ENCODE measurements at regions of chr10 and their contacts with region 1.

Region 1: DNA sequence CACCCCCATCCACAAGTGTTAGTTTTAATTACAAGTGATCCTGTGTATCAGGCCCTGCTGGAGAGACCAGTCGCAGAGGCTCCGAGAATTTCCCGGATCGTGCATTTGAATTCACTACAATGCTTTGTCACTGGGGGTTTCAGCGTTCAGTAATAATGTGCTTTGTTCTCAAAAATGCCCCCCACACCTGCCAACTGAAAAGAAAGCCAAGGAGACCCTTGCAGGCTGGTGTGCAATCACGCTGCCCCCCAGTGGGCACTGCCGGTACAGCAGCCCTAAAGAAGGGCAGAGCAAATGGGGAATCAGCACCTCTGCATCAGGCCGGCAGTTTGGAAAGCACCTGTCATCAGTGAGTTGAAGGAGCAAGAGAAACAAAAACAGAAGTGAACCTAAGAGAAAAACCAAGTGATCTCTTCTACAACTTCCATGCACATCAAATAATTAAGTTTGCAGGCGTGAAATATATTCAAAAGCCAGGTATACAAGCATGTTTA is 177.6 kb downstream of the PARD3 start:
- DNase-seq: peak; percentile 40
- ATAC-seq: peak; percentile 89
- H3K4me3 ChIP-seq: peak overlapping the region; percentile 7; the same call in 1 of the 2 replicates
- H3K27ac ChIP-seq: no peak overlapping the region
- H3K4me1 ChIP-seq: 0 out of 2 replicates have a peak, but pooled peaks cover 5% of the 10 kb centered on the region
- H3K27me3 ChIP-seq: no peaks in the 10 kb centered on the region
- CTCF ChIP-seq: peak; percentile 91 to 98 (median 97)
- EP300 ChIP-seq: peak in 1 of 2 experiments; percentile 42; a peak in 2 of 4 replicates
- POLR2A ChIP-seq: no peak
- RAD21 ChIP-seq: peak; percentile 75

Region 2: DNA sequence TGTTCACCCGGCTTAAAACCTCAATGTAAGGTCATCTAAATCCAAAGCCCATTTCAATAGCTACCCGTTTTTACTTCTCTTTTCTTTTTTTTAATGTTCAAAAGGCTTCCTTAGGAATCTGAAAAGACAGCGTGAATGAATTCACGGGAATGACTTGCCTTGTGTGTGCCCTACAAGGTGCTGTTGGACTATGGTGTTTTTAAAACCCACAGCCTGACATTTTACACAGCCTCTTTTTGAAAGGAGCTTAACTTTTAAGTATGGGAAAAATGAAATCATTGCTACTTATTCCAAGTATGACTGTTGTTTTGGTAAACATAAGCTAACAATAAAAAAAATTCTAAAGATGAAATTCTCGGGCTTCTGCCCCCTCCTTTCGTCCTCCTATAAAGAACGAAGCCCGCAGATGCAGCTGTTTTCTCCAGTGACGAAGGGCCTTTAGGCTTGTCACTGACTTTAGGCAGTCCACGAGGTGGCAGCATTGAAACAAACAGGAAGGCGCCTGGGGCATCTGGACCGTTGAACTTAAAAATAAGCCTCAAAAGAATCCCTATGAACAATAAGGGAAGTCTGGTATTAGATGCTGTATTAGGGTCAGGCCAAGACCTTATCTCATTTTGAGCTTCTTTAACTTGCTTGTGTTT is 1444.3 kb before region 1 on chr10:
- CTCF ChIA-PET with region 1: interaction called, 45 read pairs
- POLR2A ChIA-PET with region 1: no interaction called
- RAD21 ChIA-PET with region 1: interaction called, 27 read pairs
- SMC1A ChIA-PET with region 1: interaction called, 18 read pairs
- in situ Hi-C with region 1: loop called (anchors 25 kb)
- intact Hi-C with region 1: loop called (anchors 2 kb)
- DNase-seq: no peak
- ATAC-seq: peak; percentile 98
- H3K4me3 ChIP-seq: no peak overlapping the region
- H3K27ac ChIP-seq: no peak overlapping the region
- H3K4me1 ChIP-seq: no peaks in the 10 kb centered on the region
- H3K27me3 ChIP-seq: no peaks in the 10 kb centered on the region; a peak in 1 of 4 replicates
- CTCF ChIP-seq: peak; percentile 59 to 69 (median 66)
- EP300 ChIP-seq: no peak
- POLR2A ChIP-seq: no peak
- RAD21 ChIP-seq: peak; percentile 60

Region 3: DNA sequence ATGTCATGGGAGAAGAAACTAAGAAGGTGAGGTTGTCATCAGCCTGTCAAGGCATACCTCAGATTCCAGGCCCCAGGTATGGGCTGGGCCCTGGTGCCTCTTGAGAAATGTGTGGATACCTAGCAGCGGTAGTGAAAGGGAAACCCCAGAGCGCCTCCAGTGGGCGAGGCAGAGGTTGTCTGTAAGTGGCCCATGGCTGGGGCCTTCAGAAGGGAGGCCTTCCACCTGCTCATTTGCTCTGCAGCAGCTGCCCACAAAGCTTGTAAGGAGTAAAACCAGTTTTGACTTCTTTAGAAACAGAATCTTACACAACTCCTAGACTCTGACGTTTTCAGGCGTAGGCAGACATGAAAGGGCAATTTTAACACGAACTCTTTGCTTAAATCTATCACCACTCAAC is 332.3 kb before region 1 on chr10:
- CTCF ChIA-PET with region 1: interaction called, 5 read pairs
- POLR2A ChIA-PET with region 1: no interaction called
- RAD21 ChIA-PET with region 1: no interaction called
- SMC1A ChIA-PET with region 1: interaction called, 4 read pairs
- in situ Hi-C with region 1: no loop called
- intact Hi-C with region 1: loop called (anchors 10 kb)
- DNase-seq: no peak
- ATAC-seq: peak; percentile 95
- H3K4me3 ChIP-seq: no peak overlapping the region
- H3K27ac ChIP-seq: no peak overlapping the region
- H3K4me1 ChIP-seq: no peaks in the 10 kb centered on the region
- H3K27me3 ChIP-seq: no peaks in the 10 kb centered on the region
- CTCF ChIP-seq: peak; percentile 12 to 47 (median 32); a peak in 3 of 6 replicates
- EP300 ChIP-seq: no peak
- POLR2A ChIP-seq: no peak
- RAD21 ChIP-seq: peak; percentile 20; the same call in 1 of the 2 replicates

Region 4: GRCh38 chr10:34434119-34434594 is 203.3 kb before region 1 on chr10:
- CTCF ChIA-PET with region 1: no interaction called
- POLR2A ChIA-PET with region 1: no interaction called
- RAD21 ChIA-PET with region 1: no interaction called
- SMC1A ChIA-PET with region 1: no interaction called
- in situ Hi-C with region 1: no loop called
- intact Hi-C with region 1: no loop called
- DNase-seq: no peak
- ATAC-seq: peak; percentile 35
- H3K4me3 ChIP-seq: no peak overlapping the region
- H3K27ac ChIP-seq: no peak overlapping the region
- H3K4me1 ChIP-seq: no peaks in the 10 kb centered on the region
- H3K27me3 ChIP-seq: no peaks in the 10 kb centered on the region
- CTCF ChIP-seq: no peak
- EP300 ChIP-seq: no peak
- POLR2A ChIP-seq: no peak
- RAD21 ChIP-seq: no peak

Region 5: GRCh38 chr10:34522546-34522945 is 114.9 kb before region 1 on chr10:
- CTCF ChIA-PET with region 1: interaction called, 210 read pairs
- POLR2A ChIA-PET with region 1: interaction called, 3 read pairs
- RAD21 ChIA-PET with region 1: interaction called, 97 read pairs
- SMC1A ChIA-PET with region 1: interaction called, 127 read pairs
- in situ Hi-C with region 1: loop called (anchors 5 kb)
- intact Hi-C with region 1: loop called (anchors 1 kb)
- DNase-seq: no peak
- ATAC-seq: peak; percentile 63
- H3K4me3 ChIP-seq: no peak overlapping the region
- H3K27ac ChIP-seq: no peak overlapping the region
- H3K4me1 ChIP-seq: peaks cover 7% of the 10 kb centered on the region; the same call in 1 of the 2 replicates
- H3K27me3 ChIP-seq: no peaks in the 10 kb centered on the region
- CTCF ChIP-seq: peak; percentile 62 to 63 (median 63)
- EP300 ChIP-seq: no peak
- POLR2A ChIP-seq: no peak
- RAD21 ChIP-seq: peak; percentile 84

Region 6: GRCh38 chr10:34538281-34538829 is 99.1 kb before region 1 on chr10:
- CTCF ChIA-PET with region 1: interaction called, 32 read pairs
- POLR2A ChIA-PET with region 1: no interaction called
- RAD21 ChIA-PET with region 1: interaction called, 5 read pairs
- SMC1A ChIA-PET with region 1: interaction called, 6 read pairs
- in situ Hi-C with region 1: no loop called
- intact Hi-C with region 1: no loop called
- DNase-seq: peak; percentile 57
- ATAC-seq: peak; percentile 77
- H3K4me3 ChIP-seq: peak overlapping the region; percentile 31; the same call in 1 of the 2 replicates
- H3K27ac ChIP-seq: peak overlapping the region; percentile 39
- H3K4me1 ChIP-seq: peaks cover 18% of the 10 kb centered on the region
- H3K27me3 ChIP-seq: no peaks in the 10 kb centered on the region
- CTCF ChIP-seq: no peak
- EP300 ChIP-seq: no peak
- POLR2A ChIP-seq: no peak
- RAD21 ChIP-seq: no peak

Region 7: GRCh38 chr10:34615770-34616169 is 21.7 kb before region 1 on chr10:
- CTCF ChIA-PET with region 1: interaction called, 32 read pairs
- POLR2A ChIA-PET with region 1: no interaction called
- RAD21 ChIA-PET with region 1: interaction called, 4 read pairs
- SMC1A ChIA-PET with region 1: interaction called, 10 read pairs
- in situ Hi-C with region 1: no loop called
- intact Hi-C with region 1: no loop called
- DNase-seq: no peak
- ATAC-seq: peak; percentile 84
- H3K4me3 ChIP-seq: no peak overlapping the region
- H3K27ac ChIP-seq: no peak overlapping the region
- H3K4me1 ChIP-seq: no peaks in the 10 kb centered on the region
- H3K27me3 ChIP-seq: no peaks in the 10 kb centered on the region
- CTCF ChIP-seq: no peak
- EP300 ChIP-seq: 0 out of 4 replicates have a peak, but pooled peaks of 1 of the 2 experiments have one; percentile 20
- POLR2A ChIP-seq: no peak
- RAD21 ChIP-seq: no peak

Region 8: GRCh38 chr10:34716958-34717357 is 79.5 kb after region 1 on chr10:
- CTCF ChIA-PET with region 1: no interaction called
- POLR2A ChIA-PET with region 1: no interaction called
- RAD21 ChIA-PET with region 1: no interaction called
- SMC1A ChIA-PET with region 1: no interaction called
- in situ Hi-C with region 1: no loop called
- intact Hi-C with region 1: no loop called
- DNase-seq: no peak
- ATAC-seq: peak; percentile 91
- H3K4me3 ChIP-seq: no peak overlapping the region
- H3K27ac ChIP-seq: no peak overlapping the region
- H3K4me1 ChIP-seq: no peaks in the 10 kb centered on the region
- H3K27me3 ChIP-seq: 0 out of 4 replicates have a peak, but pooled peaks cover 0 to 3% of the 10 kb centered on the region in 2 experiments
- CTCF ChIP-seq: no peak
- EP300 ChIP-seq: peak in 1 of 2 experiments; percentile 51; a peak in 1 of 4 replicates
- POLR2A ChIP-seq: no peak
- RAD21 ChIP-seq: no peak

Measured in GM12878 (cell line).